Right ventricle myocardium inferior (tissue), 1 donor: ENCODE measurements at regions of chr2 and their contacts with region 1.

Region 1: GRCh38 chr2:20600756-20601325 is 50.1 kb downstream of the HS1BP3 start:
- DNase-seq: no peak
- ATAC-seq: no peak

Region 2: DNA sequence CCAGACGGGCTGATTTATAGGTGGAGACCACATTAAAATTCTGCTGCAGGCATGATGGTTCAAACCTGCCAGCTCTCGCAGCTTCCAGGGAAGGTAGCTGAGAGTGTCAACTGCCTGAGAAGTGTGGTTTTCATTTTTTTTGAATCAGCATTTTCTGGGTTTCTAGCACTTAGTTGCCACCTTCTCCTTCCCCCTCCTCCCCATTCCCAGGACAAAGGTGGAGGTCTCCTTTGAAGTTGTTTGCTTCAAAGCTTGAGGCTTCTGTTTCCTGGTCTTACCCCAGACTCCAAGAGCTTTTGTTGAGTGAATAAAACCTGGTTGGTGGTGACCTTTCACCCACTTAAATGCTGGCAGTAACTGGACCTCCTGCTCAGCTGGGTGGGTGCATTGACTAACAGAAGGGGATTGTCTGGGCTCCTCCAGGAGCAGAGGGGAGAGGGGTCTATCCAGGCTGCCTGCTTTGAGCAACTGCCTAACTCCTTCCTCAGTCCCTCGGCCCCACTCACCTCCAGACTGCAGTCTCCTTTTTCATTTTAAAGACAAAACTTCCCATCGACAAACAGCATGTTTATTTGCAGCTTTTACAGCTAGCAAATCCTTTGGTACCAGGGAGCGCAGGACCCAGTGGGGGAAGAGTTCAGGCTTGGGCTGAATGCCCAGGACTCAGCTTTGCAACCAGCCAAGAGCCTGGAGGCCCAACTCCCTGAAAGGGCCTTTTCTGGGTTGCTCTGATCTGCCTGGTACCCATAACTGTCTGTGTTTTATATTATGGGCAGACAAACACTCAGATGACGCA is 150.4 kb before region 1 on chr2:
- intact Hi-C with region 1: loop called (anchors 1 kb)
- DNase-seq: no peak
- ATAC-seq: peak; percentile 39

Region 3: GRCh38 chr2:20578895-20579825 is 21.7 kb before region 1 on chr2:
- intact Hi-C with region 1: loop called (anchors 1 kb)
- DNase-seq: peak; percentile 89
- ATAC-seq: peak; percentile 90

Region 4: DNA sequence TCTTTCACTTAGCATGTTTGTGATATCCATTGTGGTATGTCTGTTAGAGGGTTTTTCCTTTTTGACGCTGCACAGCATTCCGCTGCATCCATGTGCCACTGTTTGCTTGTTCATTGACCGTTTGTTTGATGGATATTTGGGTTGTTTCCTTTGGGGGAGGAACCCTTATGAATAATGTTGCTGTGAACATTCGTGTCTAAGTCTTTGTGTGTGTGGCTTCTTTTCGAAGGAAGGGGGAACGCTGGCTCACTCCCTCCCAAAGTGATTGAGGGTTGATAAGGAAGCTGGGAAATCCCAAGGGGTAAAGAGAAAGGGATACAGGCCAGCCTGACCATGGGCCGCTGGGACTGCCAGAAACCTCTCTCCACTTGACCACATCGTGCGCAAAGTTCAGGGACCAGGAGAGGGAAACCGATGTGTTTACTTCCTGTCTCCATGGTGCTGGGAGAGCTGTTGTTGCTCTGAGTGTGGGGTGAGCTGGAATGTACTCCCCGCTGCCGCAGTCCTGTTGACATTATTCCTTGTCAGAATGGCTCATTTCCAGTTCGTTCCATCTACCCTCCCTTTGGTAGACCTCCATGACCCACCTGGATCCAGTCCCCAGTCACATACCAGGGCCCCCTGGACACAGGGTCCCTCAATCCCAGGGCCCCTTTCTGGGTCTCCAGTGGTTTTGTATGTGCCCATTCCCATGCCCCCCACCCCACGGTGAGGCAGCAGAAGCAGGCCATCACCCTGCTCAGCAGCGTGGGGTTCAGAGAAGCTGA is 10.4 kb after region 1 on chr2:
- intact Hi-C with region 1: loop called (anchors 1 kb)
- DNase-seq: peak; percentile 84
- ATAC-seq: peak; percentile 89

Region 5: DNA sequence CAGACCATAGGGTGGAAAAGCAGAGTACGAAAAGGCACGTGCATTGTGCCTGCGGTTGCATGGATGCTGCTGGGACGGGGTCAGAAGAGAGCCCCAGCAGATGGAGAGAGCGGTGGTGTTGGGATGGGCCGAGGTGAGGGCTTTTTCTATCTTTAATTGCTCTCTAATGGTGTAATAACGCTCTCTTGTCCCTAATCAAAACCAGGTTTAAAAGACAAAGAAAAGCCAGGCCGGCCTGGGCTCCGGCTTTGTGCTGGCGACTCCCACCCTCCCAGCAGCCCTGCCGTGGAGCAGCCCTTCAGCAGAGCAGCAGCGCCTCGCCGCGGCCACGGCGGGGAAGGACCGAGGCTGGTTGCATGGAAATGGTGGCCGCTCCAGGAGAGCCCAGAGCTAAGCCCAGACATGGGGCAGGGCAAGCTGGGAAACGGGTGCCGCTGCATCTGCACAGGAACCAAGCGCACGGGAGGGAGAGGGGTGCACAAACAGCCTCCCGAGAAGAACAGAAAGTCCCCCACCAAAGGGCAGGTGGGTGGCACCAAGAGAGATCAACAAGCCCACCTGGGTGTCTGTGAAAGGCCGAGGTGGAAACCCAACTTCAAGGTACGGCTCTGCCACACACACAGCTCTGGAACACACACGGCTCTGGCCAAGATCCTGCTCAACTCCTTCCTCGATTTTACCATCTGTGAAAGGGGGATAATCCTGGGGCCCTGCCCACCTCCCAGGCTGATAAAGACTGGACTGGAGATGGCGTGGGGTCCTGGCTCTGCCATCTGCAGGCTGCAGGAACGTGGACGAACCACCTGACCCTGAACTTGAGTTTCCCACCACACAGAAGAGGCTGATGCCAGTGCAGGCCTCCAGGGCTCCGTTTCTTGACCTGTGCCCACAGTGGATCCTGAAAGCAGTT is 35.1 kb after region 1 on chr2:
- intact Hi-C with region 1: loop called (anchors 2 kb)
- DNase-seq: peak; percentile 91
- ATAC-seq: peak; percentile 87